ENCODE measurements at regions of chr7 and their contacts with region 1.

Region 1: DNA sequence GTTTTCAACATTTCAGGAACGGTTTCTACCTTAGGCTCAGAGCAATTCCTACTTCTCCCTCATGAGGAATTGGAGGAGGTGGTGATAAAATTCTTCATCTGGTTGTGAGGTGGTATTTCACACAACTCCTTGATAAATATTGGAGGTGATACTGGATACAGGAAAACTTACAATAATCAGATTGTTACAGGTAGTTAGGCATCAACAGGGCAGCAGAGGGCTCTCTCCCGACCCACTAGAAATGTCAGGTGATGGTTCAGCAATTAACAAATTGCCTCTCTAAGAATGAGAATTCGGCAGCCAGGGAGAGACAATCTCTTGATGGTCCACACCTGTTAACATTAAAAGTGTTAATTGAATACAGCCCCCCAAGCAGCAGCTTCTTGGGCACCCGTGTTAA is 22.6 kb downstream of the ZNF786 start:
- DNase-seq: no peak
- H3K4me3 ChIP-seq: no peak overlapping the region
- H3K27ac ChIP-seq: no peak overlapping the region
- H3K4me1 ChIP-seq: peaks cover 0 to 4% (median 0%) of the 10 kb centered on the region in 4 donors
- H3K27me3 ChIP-seq: no peaks in the 10 kb centered on the region
- CTCF ChIP-seq: no peak

Region 2: DNA sequence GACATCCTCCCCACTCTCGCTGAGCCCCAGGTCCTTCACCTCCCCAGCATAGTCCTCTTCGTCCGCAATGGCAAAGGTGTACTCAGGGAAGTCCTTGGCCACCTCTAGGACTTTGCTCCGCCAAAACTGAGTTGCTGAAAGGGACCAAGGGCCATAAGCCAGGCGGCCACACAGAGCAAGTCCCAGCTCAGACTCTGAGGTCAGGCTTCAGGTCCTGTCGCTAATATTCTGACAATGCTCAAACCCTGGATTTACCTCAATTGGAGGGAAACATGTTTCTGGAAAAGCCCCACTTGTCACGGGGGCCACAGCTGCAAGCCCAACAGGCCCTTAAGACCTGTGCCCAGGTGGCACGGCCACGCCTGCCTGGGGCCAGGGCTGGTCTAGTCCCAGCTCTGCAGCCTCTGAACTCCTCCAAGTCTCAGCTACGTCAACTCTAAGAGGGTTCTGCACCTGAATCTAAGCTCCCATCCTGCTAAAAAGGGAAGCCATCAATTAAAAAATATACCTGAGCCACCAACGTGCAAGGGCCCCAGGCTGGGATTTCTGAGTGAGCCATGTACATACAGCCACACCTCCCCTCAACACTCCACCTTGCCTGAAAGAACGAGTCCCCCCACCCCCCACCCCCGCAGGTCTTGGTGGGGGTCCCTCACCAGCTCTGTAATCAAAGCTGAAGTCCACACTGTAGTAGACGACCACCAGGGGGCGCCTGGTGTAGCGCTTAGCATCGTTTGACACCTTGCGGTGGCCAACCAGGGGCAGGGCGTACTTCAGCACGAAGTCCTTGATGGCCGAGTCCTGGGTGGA is 62.4 kb before region 1 on chr7:
- intact Hi-C with region 1: loop called (anchors 2 kb)
- DNase-seq: peak; percentile 80 to 87
- H3K4me3 ChIP-seq: no peak overlapping the region
- H3K27ac ChIP-seq: no peak overlapping the region
- H3K4me1 ChIP-seq: peaks cover 0 to 13% (median 10%) of the 10 kb centered on the region in 4 donors
- H3K27me3 ChIP-seq: no peaks in the 10 kb centered on the region
- CTCF ChIP-seq: peak; percentile 81 to 89

Region 3: DNA sequence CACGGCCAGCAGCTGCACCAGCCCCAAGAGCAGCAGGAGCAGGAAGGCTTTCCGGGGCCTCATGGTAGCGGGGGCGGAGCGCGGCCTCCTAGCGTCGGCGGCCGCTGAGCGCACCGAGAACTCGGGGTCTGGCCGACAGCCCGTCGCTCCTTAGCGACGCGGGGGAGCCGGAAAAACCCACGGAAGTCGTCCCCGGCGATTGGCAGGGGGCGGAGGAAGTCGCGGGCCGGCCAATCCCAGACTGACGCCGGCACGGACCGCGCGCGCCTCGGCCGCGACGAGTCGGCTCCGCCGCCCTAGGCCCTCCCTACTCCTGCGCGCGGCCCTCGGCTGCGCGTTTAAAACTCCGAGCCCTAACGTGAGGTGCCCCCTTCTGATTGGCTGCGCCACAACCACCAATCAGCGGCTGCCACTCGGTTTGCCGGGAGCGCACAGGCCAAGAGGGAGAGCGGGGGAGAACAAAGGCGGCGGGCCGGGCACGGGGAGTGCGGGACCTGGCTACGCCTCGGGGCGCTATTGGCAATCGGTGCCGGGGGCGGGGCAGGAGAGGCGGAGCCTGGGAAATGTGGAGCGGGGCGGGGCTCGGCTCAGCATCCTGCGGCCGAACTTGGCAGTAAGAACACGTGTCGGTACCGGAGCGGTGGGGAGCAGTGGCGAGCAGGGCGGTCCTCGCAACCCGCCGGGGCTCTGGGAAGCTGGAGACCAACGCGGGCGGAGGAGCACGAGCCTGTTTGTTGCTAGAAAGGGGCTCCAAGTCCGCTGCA is 39.3 kb before region 1 on chr7 and contains the start of gene PDIA4:
- intact Hi-C with region 1: loop called (anchors 2 kb)
- DNase-seq: peak; percentile 99 to 100
- H3K4me3 ChIP-seq: peak within 1 kb of the TSS; percentile 73 to 82
- H3K27ac ChIP-seq: peak within 1 kb of the TSS; percentile 76 to 90
- H3K4me1 ChIP-seq: peaks cover 0 to 23% (median 19%) of the 10 kb centered on the region in 4 donors
- H3K27me3 ChIP-seq: no peaks in the 10 kb centered on the region
- CTCF ChIP-seq: peak in 1 of 2 experiments; percentile 26

Region 4: GRCh38 chr7:149369508-149369907 is 301.6 kb after region 1 on chr7:
- intact Hi-C with region 1: no loop called
- DNase-seq: no peak
- H3K4me3 ChIP-seq: no peak overlapping the region
- H3K27ac ChIP-seq: no peak overlapping the region
- H3K4me1 ChIP-seq: no peaks in the 10 kb centered on the region
- H3K27me3 ChIP-seq: no peaks in the 10 kb centered on the region
- CTCF ChIP-seq: no peak

Measured in tibial artery (tissue), 4 donors.